ENCODE measurements at regions of chr4 and their contacts with region 1.

Region 1: GRCh38 chr4:127604949-127605709 is 27.6 kb upstream of the INTU start:
- DNase-seq: no peak
- H3K4me3 ChIP-seq: no peak overlapping the region
- H3K27ac ChIP-seq: no peak overlapping the region
- H3K4me1 ChIP-seq: no peaks in the 10 kb centered on the region
- H3K27me3 ChIP-seq: peaks cover 0 to 17% (median 0%) of the 10 kb centered on the region in 4 donors
- CTCF ChIP-seq: peak in 5 of 6 experiments; percentile 22 to 67 (median 57)
- POLR2A ChIP-seq: no peak

Region 2: GRCh38 chr4:127410201-127410600 is 194.9 kb before region 1 on chr4:
- intact Hi-C with region 1: no loop called
- DNase-seq: no peak
- H3K4me3 ChIP-seq: no peak overlapping the region
- H3K27ac ChIP-seq: peak overlapping the region in 1 of 4 donors; percentile 3
- H3K4me1 ChIP-seq: no peaks in the 10 kb centered on the region
- H3K27me3 ChIP-seq: no peaks in the 10 kb centered on the region
- CTCF ChIP-seq: no peak
- POLR2A ChIP-seq: no peak

Region 3: DNA sequence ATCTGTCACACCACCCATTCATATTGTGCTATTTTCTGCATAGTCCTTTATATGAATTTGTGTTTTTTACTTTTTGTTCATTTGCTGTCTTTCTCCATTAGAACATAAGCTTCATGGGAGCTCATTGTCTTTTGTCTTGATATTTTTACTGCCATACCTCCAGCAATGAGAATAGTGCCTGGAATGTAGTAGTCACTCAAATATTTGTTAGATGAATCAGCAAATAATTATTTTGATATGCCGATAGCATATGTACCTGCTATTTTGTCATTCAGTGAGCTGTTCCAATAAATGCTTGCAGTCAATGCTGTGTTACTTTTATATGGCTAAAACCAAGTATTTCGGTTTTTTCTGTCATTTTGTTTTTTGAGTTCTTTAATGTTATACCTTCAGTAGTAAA is 81.5 kb after region 1 on chr4:
- intact Hi-C with region 1: no loop called
- DNase-seq: no peak
- H3K4me3 ChIP-seq: no peak overlapping the region
- H3K27ac ChIP-seq: no peak overlapping the region
- H3K4me1 ChIP-seq: no peaks in the 10 kb centered on the region
- H3K27me3 ChIP-seq: no peaks in the 10 kb centered on the region
- CTCF ChIP-seq: no peak
- POLR2A ChIP-seq: no peak

Region 4: DNA sequence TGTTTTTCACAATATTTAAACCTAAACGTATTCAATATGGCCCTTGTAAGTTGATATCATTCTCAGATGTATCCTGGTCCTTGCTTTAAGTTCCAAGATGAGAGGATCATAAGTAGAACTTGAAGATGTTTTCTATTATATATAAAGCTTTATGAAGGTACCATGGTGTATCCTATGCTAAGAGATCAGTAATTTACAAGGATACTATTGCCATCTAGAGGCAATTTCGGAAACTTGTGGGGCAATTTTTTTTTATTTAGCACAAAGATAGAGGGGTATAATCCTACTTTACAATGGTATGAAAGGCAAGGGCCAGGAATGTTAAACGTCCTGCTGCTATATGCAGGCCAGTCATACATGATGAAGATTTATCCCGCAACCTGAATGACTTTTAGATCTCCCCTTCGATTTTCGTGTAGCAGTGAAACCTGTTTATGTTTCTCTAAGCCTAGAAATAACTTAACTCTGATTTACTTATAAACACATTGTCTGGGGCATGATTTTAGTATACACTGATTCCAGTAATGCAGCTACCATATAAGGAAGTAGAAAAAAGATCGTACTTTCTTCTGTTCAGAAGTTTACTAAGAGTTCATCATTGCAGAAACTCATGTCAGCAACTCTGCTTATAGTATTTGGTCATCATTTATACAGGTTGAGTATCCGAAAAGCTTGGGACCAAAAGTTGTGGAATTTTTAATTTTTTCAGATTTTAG is 127.6 kb after region 1 on chr4:
- intact Hi-C with region 1: loop called (anchors 5 kb)
- DNase-seq: no peak
- H3K4me3 ChIP-seq: no peak overlapping the region
- H3K27ac ChIP-seq: no peak overlapping the region
- H3K4me1 ChIP-seq: no peaks in the 10 kb centered on the region
- H3K27me3 ChIP-seq: no peaks in the 10 kb centered on the region
- CTCF ChIP-seq: peak in 5 of 6 experiments; percentile 42 to 66 (median 52)
- POLR2A ChIP-seq: no peak

Measured in esophagus squamous epithelium (tissue), 5 donors.